Sigmoid colon (tissue), 7 donors: ENCODE measurements at regions of chr5 and their contacts with region 1.

Region 1: GRCh38 chr5:114988096-114988495 is 181.6 kb downstream of the TRIM36 start:
- DNase-seq: no peak
- H3K4me3 ChIP-seq: no peak overlapping the region
- H3K27ac ChIP-seq: no peak overlapping the region
- H3K4me1 ChIP-seq: no peaks in the 10 kb centered on the region
- H3K27me3 ChIP-seq: no peaks in the 10 kb centered on the region
- CTCF ChIP-seq: no peak
- EP300 ChIP-seq: no peak
- POLR2A ChIP-seq: no peak

Region 2: GRCh38 chr5:114999176-114999575 is 11.1 kb after region 1 on chr5:
- intact Hi-C with region 1: loop called (anchors 1 kb)
- DNase-seq: no peak
- H3K4me3 ChIP-seq: no peak overlapping the region
- H3K27ac ChIP-seq: no peak overlapping the region
- H3K4me1 ChIP-seq: no peaks in the 10 kb centered on the region
- H3K27me3 ChIP-seq: no peaks in the 10 kb centered on the region
- CTCF ChIP-seq: no peak
- EP300 ChIP-seq: no peak
- POLR2A ChIP-seq: no peak